ENCODE measurements at regions of chr5 and their contacts with region 1.

Region 1: GRCh38 chr5:179678223-179679013 is 2.4 kb downstream of the CBY3 start:
- DNase-seq: peak; percentile 97
- CTCF ChIP-seq: peak; percentile 32

Region 2: DNA sequence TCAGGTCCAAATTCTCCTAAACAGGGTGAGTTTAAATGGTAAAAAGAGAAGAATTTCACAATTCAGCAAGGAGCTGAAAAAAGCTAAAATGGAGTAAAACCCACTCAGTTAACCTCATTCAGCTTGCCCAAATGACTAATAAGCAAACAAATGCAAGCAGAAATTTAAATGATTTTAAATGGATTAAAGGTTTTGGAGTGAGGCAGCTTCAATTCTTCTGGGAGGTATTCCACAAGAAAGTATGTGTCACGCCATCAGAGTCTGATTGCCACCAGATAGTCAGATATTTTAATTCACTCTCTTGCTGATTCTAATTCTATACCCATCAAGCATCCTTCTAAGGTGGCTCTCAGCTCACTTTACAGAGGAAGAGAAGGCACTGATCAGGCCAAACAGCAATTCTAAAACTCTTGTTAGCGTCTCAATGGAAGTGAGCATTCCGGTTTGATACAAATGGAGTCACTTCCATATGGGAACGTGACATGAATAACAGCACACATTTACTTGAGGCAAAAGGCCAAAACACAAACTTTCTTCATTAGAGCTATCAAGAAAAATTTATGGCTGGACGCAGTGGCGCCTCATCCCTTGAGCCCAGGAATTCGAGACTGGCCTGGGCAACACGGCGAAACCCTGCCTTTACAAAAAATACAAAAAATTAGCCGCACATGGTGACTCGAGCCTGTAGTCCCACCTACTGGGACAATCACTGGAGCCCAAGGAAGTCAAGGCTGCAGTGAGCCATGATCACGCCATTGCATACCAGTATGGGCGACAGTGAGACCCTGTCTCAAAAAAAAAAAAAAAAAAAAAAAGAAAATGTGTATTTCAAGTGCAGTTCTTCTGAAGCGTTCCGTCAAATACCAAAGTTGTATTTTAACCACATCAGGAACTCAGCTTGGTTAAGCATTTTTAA is 1053.5 kb before region 1 on chr5:
- CTCF ChIA-PET with region 1: no interaction called
- POLR2A ChIA-PET with region 1: no interaction called
- DNase-seq: no peak
- CTCF ChIP-seq: no peak

Region 3: GRCh38 chr5:179450961-179451827 is 227.2 kb before region 1 on chr5:
- CTCF ChIA-PET with region 1: no interaction called
- POLR2A ChIA-PET with region 1: no interaction called
- DNase-seq: no peak
- CTCF ChIP-seq: no peak

Region 4: GRCh38 chr5:179668391-179668790 is 10.0 kb before region 1 on chr5:
- CTCF ChIA-PET with region 1: interaction called, 17 read pairs
- POLR2A ChIA-PET with region 1: no interaction called
- DNase-seq: peak; percentile 51
- CTCF ChIP-seq: peak; percentile 65

Region 5: GRCh38 chr5:179697993-179698934 is 19.8 kb after region 1 on chr5:
- CTCF ChIA-PET with region 1: interaction called, 20 read pairs
- POLR2A ChIA-PET with region 1: no interaction called
- DNase-seq: peak; percentile 99
- CTCF ChIP-seq: peak; percentile 11

Region 6: DNA sequence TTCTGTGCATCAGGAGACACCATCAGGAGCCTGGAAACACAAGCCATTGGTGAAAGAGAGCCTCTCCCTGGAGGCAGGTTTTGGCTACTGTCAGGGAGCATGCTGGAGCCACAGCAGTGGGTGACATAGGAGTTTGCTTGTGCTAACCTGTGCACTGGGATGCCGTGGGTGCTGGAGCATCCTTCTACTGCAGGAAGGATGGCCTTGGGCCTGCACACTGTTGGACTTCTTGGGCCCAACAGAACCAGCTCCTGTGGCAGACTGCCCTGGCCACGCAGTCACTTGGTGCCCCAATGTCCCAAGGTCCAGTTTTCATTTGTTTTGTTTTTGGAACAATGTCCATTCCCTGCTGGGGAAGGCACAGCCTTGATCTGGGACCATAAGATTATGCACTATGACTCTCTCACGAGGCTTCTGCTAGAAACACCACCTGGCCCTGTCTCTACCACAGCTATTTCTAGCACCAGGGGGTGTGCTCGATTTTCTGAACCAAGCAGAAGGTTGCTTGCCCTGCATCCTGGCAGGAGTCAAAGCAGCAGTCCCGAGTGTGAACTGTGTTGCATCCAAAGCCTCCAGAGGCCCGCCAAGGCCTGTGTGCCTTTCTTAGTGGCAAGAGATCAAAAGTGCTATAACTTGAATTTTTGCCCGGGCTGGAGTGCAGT is 109.9 kb after region 1 on chr5:
- CTCF ChIA-PET with region 1: no interaction called
- POLR2A ChIA-PET with region 1: no interaction called
- DNase-seq: no peak
- CTCF ChIP-seq: no peak

Region 7: GRCh38 chr5:179828756-179829421 is 150.5 kb after region 1 on chr5:
- CTCF ChIA-PET with region 1: no interaction called
- POLR2A ChIA-PET with region 1: no interaction called
- DNase-seq: no peak
- CTCF ChIP-seq: no peak

Measured in GM10248 (cell line).